ENCODE measurements at regions of chr1 and their contacts with region 1.

Region 1: GRCh38 chr1:244599937-244600350 is 53.0 kb upstream of the DESI2 start:
- DNase-seq: no peak
- H3K4me3 ChIP-seq: peak overlapping the region in 1 of 4 donors; percentile 6
- H3K27ac ChIP-seq: peak overlapping the region in 2 of 4 donors; percentile 33 to 48
- H3K4me1 ChIP-seq: peaks cover 0 to 9% (median 0%) of the 10 kb centered on the region in 4 donors
- H3K27me3 ChIP-seq: no peaks in the 10 kb centered on the region
- CTCF ChIP-seq: no peak
- EP300 ChIP-seq: no peak
- POLR2A ChIP-seq: no peak

Region 2: DNA sequence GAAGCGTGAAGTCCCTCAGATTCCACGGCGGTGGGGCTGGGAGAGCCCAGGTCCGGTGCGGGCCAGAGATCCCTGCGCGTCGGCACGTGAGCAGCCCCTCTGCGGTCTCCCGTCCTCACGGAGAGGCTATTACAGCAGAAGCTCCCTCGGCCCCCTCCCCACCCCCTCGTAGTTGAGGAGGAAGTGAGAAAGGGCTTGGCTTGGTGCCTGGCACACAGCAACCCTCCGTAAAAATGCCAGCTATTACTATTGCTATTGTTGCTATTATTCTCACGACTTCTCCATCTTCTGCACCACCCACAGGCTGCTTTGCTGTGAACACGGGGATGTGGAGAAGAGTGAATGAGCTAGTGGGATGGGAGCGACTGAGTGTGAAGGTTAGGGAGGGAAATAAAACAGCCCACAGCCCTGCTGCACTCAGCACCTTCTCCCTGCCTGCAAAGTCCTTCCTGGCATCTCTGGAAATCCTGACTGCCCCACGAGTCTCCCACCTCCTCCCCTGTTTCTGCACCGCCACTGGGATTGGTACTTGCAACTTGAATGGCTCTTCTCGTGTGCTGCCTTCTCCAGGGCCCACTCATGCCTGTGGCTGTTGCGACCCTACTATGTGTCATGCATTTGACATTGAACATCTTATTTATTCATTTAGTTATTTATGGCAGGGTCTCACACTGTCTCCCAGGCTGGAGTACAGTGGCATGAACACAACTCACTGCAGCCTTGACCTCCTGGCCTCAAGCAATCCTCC is 522.3 kb before region 1 on chr1:
- intact Hi-C with region 1: no loop called
- DNase-seq: no peak
- H3K4me3 ChIP-seq: no peak overlapping the region
- H3K27ac ChIP-seq: no peak overlapping the region
- H3K4me1 ChIP-seq: peaks cover 0 to 4% (median 0%) of the 10 kb centered on the region in 4 donors
- H3K27me3 ChIP-seq: peaks cover 0 to 25% (median 0%) of the 10 kb centered on the region in 3 donors
- CTCF ChIP-seq: no peak
- EP300 ChIP-seq: no peak
- POLR2A ChIP-seq: no peak

Region 3: GRCh38 chr1:244796718-244797406 is 196.9 kb after region 1 on chr1:
- intact Hi-C with region 1: loop called (anchors 1 kb)
- DNase-seq: peak; percentile 72
- H3K4me3 ChIP-seq: no peak overlapping the region
- H3K27ac ChIP-seq: no peak overlapping the region
- H3K4me1 ChIP-seq: peaks cover 0 to 6% (median 0%) of the 10 kb centered on the region in 4 donors
- H3K27me3 ChIP-seq: no peaks in the 10 kb centered on the region
- CTCF ChIP-seq: peak; percentile 71 to 84 (median 79)
- EP300 ChIP-seq: no peak
- POLR2A ChIP-seq: no peak